K562 (cell line): ENCODE measurements at regions of chr3 and their contacts with region 1.

Region 1: DNA sequence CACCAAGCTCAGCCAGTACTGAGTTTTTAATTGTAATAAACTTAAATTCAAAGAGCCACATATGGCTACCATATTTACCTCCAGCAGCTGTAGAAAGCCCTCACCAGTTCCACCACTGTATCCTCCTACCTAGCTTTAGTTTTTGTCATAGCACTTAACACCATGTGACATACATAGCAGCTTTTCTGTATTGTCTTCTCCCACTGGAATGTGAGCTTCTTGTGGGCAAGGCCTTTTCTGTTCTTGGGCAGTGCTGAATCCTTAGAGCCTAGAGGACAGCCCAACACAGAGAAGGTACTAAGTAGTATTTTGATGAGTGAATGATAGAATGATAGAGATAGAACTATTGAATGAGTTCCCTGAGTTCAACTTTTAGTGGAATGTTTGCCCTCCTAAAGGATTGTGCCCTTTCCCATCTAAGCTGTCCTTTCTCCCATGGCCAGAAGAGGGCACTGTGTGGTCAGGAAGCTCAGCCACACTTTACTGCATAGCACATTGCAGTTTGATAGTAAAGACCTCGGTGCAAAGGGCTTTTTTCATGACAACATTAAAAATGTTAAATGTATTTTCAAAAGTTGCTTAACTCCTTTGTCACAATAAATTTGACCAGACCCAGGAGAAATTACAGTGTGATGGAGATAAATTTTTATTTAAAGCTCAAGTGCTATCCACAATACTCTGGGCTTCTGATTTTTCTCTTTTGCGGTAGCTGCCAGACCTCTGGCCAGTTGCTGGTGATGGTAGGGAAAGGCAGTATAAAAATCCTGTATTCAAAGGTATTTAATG is 115.8 kb downstream of the GHSR start:
- DNase-seq: peak; percentile 59 to 73 (median 70)
- ATAC-seq: peak; percentile 96
- H3K4me3 ChIP-seq: no peak overlapping the region
- H3K27ac ChIP-seq: no peak overlapping the region
- H3K4me1 ChIP-seq: no peaks in the 10 kb centered on the region
- H3K27me3 ChIP-seq: no peaks in the 10 kb centered on the region
- CTCF ChIP-seq: peak; percentile 75 to 85 (median 77)
- EP300 ChIP-seq: no peak
- POLR2A ChIP-seq: no peak
- RAD21 ChIP-seq: peak; percentile 42 to 65

Region 2: DNA sequence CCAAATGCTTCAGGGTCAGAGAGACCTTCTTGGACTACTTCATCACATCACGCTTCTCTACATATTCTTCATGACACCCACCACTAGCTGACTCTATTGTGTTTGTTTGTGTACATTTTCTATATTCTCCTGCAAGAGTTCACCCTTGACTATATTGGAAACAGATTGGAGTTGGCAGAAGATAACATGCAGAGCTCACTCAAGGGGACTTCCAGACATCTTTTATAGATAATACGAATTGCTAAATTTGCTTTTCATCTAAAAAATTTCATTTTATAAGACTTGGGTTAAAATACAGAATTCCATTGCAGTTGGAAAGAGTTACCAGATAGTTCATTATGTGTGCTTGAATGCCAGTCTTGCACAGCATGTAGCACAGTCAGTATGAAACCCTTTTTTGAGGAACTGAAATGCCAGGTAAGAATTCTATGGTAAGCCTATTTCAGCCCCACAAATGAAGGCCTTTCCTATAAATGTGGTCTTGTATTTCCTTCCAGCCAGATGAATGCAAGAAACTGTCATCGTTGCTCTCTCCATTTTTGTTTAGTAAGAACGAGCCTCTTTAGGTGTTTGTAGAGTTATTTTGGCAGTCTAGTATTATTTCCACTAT is 61.8 kb before region 1 on chr3:
- CTCF ChIA-PET with region 1: no interaction called
- POLR2A ChIA-PET with region 1: no interaction called
- in situ Hi-C with region 1: no loop called
- intact Hi-C with region 1: no loop called
- DNase-seq: no peak
- ATAC-seq: no peak
- H3K4me3 ChIP-seq: no peak overlapping the region
- H3K27ac ChIP-seq: no peak overlapping the region
- H3K4me1 ChIP-seq: no peaks in the 10 kb centered on the region
- H3K27me3 ChIP-seq: no peaks in the 10 kb centered on the region
- CTCF ChIP-seq: no peak
- EP300 ChIP-seq: no peak
- POLR2A ChIP-seq: no peak
- RAD21 ChIP-seq: no peak

Region 3: GRCh38 chr3:172476347-172476746 is 143.9 kb after region 1 on chr3:
- CTCF ChIA-PET with region 1: interaction called, 8 read pairs
- POLR2A ChIA-PET with region 1: no interaction called
- in situ Hi-C with region 1: no loop called
- intact Hi-C with region 1: loop called (anchors 1 kb)
- DNase-seq: no peak
- ATAC-seq: peak; percentile 41
- H3K4me3 ChIP-seq: no peak overlapping the region
- H3K27ac ChIP-seq: no peak overlapping the region
- H3K4me1 ChIP-seq: no peaks in the 10 kb centered on the region
- H3K27me3 ChIP-seq: no peaks in the 10 kb centered on the region
- CTCF ChIP-seq: no peak
- EP300 ChIP-seq: no peak
- POLR2A ChIP-seq: no peak
- RAD21 ChIP-seq: no peak

Region 4: GRCh38 chr3:172666873-172667694 is 334.6 kb after region 1 on chr3:
- CTCF ChIA-PET with region 1: interaction called, 8 read pairs
- POLR2A ChIA-PET with region 1: no interaction called
- in situ Hi-C with region 1: no loop called
- intact Hi-C with region 1: loop called (anchors 1 kb)
- DNase-seq: peak; percentile 62 to 81 (median 65)
- ATAC-seq: peak; percentile 100
- H3K4me3 ChIP-seq: no peak overlapping the region
- H3K27ac ChIP-seq: no peak overlapping the region
- H3K4me1 ChIP-seq: no peaks in the 10 kb centered on the region
- H3K27me3 ChIP-seq: no peaks in the 10 kb centered on the region
- CTCF ChIP-seq: peak; percentile 84 to 94 (median 87)
- EP300 ChIP-seq: no peak
- POLR2A ChIP-seq: no peak
- RAD21 ChIP-seq: peak; percentile 80 to 86